ENCODE measurements at regions of chr9 and their contacts with region 1.

Region 1: GRCh38 chr9:125746017-125746773 is 978 bp upstream of the PBX3 start:
- DNase-seq: peak; percentile 86 to 96 (median 89)
- ATAC-seq: peak; percentile 93
- H3K4me3 ChIP-seq: peak overlapping the region; percentile 87
- H3K4me3 Mint-ChIP-seq: peak overlapping the region; percentile 94 to 99 (median 94)
- H3K27ac ChIP-seq: peak overlapping the region; percentile 65
- H3K27ac Mint-ChIP-seq: peak overlapping the region; percentile 84 to 93 (median 90)
- H3K4me1 ChIP-seq: peaks cover 0 to 4% of the 10 kb centered on the region in 2 donors
- H3K4me1 Mint-ChIP-seq: peaks cover 9 to 41% (median 33%) of the 10 kb centered on the region in 7 donors
- H3K27me3 ChIP-seq: no peaks in the 10 kb centered on the region
- H3K27me3 Mint-ChIP-seq: peaks cover 0 to 41% (median 0%) of the 10 kb centered on the region in 5 donors

Region 2: DNA sequence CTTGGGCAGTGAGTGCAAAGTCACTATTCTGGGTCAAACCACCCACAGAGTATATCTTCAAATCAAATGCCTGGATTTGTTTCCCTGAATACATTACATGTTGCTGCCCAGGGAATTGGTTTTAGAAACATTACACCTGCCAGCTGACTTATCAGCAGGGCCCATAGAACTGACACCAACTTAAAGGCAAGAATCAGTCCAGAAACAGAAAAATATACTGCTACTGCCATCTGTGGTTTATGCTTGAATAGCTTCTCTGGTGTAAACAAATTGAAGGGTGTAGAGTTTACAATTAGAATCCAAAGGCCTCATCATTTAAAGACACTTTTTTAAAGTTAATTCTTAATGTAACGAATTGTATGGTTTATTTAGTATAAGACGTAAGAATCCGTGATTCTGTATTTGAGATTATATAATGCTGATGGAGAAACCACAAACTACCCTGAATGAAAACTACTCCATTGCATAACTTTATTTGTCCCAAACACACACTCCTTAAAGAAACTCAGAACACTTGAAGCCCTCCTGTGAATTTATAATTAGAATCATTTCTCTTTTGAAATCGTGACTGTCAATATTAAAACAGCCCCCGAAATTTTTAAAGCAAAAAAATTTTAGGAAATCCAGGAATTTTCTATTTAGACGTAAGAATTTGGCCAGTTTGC is 981.3 kb before region 1 on chr9:
- CTCF ChIA-PET with region 1: no interaction called
- POLR2A ChIA-PET with region 1: no interaction called
- intact Hi-C with region 1: loop called in 1 of 2 experiments (anchors 10 kb)
- DNase-seq: no peak
- ATAC-seq: no peak
- H3K4me3 ChIP-seq: no peak overlapping the region
- H3K4me3 Mint-ChIP-seq: no peak overlapping the region
- H3K27ac ChIP-seq: no peak overlapping the region
- H3K27ac Mint-ChIP-seq: no peak overlapping the region
- H3K4me1 ChIP-seq: peaks cover 5% of the 10 kb centered on the region in 2 donors
- H3K4me1 Mint-ChIP-seq: peaks cover 0 to 14% (median 11%) of the 10 kb centered on the region in 7 donors
- H3K27me3 ChIP-seq: peaks cover 8 to 26% of the 10 kb centered on the region in 2 donors
- H3K27me3 Mint-ChIP-seq: peaks cover 68 to 92% (median 81%) of the 10 kb centered on the region in 5 donors

Region 3: DNA sequence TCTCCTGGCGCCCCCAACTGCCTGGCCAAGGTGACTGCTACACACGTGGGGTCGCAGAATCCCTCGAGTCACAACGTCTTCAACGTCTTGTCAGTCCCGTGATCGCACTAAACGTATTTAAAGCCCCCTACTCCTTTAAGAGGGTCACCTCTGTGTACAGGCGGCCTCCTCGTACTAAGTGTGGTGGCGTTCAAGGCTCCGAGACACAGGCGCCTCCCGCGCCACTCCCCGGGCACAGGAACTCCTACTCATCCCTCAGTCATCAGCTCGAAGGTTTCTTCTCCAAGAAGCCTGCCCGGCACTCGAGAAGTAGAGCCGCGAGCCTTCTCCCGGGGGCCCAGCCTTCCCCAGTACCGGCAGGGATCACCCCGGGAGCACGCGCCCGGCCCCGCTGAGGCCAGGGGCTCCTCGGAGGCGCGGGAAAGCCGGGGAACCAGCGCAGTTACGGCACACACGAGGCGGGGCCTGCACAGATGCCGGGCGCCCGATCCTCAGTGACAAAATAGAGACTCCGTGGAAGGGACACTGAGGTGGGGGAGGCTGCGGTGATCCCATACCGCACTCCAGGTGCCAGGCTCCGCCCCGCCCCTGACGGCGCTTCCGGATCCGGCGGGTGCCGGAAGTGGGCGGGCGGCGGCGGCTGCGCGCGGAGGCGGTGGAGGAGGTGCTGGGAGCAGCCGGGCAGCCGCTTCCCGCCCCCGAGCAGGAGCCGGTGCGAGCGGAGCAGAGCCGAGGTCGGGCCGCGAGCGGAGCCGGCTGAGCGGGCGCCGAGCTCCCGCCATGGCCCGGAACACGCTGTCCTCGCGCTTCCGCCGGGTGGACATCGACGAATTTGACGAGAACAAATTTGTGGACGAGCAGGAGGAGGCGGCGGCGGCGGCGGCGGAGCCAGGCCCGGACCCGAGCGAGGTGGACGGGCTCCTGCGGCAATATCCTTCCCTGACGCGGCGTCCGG is 877.4 kb before region 1 on chr9:
- CTCF ChIA-PET with region 1: no interaction called
- POLR2A ChIA-PET with region 1: no interaction called
- intact Hi-C with region 1: loop called (anchors 2 to 5 kb)
- DNase-seq: peak; percentile 84 to 99 (median 91)
- ATAC-seq: peak; percentile 89
- H3K4me3 ChIP-seq: peak overlapping the region; percentile 95
- H3K4me3 Mint-ChIP-seq: peak overlapping the region; percentile 87 to 96 (median 93)
- H3K27ac ChIP-seq: peak overlapping the region; percentile 87
- H3K27ac Mint-ChIP-seq: peak overlapping the region; percentile 82 to 98 (median 89)
- H3K4me1 ChIP-seq: peaks cover 29 to 39% of the 10 kb centered on the region in 2 donors
- H3K4me1 Mint-ChIP-seq: peaks cover 20 to 55% (median 47%) of the 10 kb centered on the region in 7 donors
- H3K27me3 ChIP-seq: no peaks in the 10 kb centered on the region
- H3K27me3 Mint-ChIP-seq: no peaks in the 10 kb centered on the region

Region 4: GRCh38 chr9:125241000-125241862 is 505.0 kb before region 1 on chr9 and contains the start of gene HSPA5:
- CTCF ChIA-PET with region 1: no interaction called
- POLR2A ChIA-PET with region 1: no interaction called
- intact Hi-C with region 1: loop called (anchors 1 to 2 kb)
- DNase-seq: peak; percentile 94 to 100 (median 99)
- ATAC-seq: peak; percentile 94
- H3K4me3 ChIP-seq: peak within 1 kb of the TSS; percentile 85
- H3K4me3 Mint-ChIP-seq: peak within 1 kb of the TSS; percentile 94 to 99 (median 98)
- H3K27ac ChIP-seq: peak within 1 kb of the TSS; percentile 97
- H3K27ac Mint-ChIP-seq: peak within 1 kb of the TSS; percentile 96 to 100 (median 99)
- H3K4me1 ChIP-seq: peaks cover 39 to 48% of the 10 kb centered on the region in 2 donors
- H3K4me1 Mint-ChIP-seq: peaks cover 27 to 49% (median 45%) of the 10 kb centered on the region in 7 donors
- H3K27me3 ChIP-seq: no peaks in the 10 kb centered on the region
- H3K27me3 Mint-ChIP-seq: peaks cover 0 to 5% (median 0%) of the 10 kb centered on the region in 5 donors
- total RNA-seq, gene HSPA5: 127 to 248 (median 155) TPM

Region 5: GRCh38 chr9:125558453-125559092 is 187.6 kb before region 1 on chr9:
- CTCF ChIA-PET with region 1: no interaction called
- POLR2A ChIA-PET with region 1: no interaction called
- intact Hi-C with region 1: loop called in 1 of 2 experiments (anchors 2 kb)
- DNase-seq: peak in 8 of 9 donors; percentile 18 to 63 (median 55)
- ATAC-seq: peak; percentile 78
- H3K4me3 ChIP-seq: no peak overlapping the region
- H3K4me3 Mint-ChIP-seq: no peak overlapping the region
- H3K27ac ChIP-seq: no peak overlapping the region
- H3K27ac Mint-ChIP-seq: peak overlapping the region in 1 of 9 donors; percentile 28
- H3K4me1 ChIP-seq: no peaks in the 10 kb centered on the region
- H3K4me1 Mint-ChIP-seq: peaks cover 0 to 19% (median 11%) of the 10 kb centered on the region in 7 donors
- H3K27me3 ChIP-seq: no peaks in the 10 kb centered on the region
- H3K27me3 Mint-ChIP-seq: no peaks in the 10 kb centered on the region

Region 6: DNA sequence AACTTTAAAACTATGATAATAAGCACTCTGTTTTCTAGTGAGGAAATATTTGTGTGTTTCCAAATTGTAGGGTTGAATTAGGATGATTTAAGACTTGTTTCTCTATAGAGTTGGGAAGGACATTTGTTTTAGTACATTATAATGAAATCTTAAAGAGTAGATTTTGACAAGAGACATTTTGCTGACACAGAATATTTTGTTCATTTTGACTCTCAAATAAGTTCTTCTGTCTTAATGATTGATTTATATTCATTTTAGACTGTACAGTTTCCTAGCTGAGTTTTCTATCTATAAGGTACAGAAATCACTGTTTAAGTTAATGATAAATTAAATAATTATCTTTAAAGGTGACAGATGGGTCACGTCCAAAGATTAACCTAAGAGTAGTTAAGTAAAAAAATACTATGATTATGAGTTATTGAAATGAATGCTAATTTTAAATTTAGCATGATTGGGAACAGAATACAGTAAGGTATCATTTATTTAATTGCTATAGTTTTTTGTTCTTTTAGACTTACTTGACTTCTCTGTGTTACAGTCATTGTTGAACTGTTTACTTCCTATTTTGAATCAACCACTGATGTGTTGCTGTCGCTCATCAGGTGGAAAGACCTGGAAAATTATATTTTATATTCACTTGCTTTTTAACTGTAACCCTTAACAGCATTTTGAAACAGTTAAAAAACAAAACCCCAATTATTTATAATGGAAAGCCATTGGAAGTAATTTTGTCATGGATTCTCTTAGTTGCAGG is 20.4 kb after region 1 on chr9:
- CTCF ChIA-PET with region 1: no interaction called
- POLR2A ChIA-PET with region 1: no interaction called
- intact Hi-C with region 1: loop called in 1 of 2 experiments (anchors 1 kb)
- DNase-seq: no peak
- ATAC-seq: no peak
- H3K4me3 ChIP-seq: no peak overlapping the region
- H3K4me3 Mint-ChIP-seq: no peak overlapping the region
- H3K27ac ChIP-seq: no peak overlapping the region
- H3K27ac Mint-ChIP-seq: no peak overlapping the region
- H3K4me1 ChIP-seq: no peaks in the 10 kb centered on the region
- H3K4me1 Mint-ChIP-seq: peaks cover 5 to 24% (median 11%) of the 10 kb centered on the region in 7 donors
- H3K27me3 ChIP-seq: no peaks in the 10 kb centered on the region
- H3K27me3 Mint-ChIP-seq: no peaks in the 10 kb centered on the region

Region 7: GRCh38 chr9:125889476-125890419 is 143.6 kb after region 1 on chr9:
- CTCF ChIA-PET with region 1: no interaction called
- POLR2A ChIA-PET with region 1: no interaction called
- intact Hi-C with region 1: loop called in 1 of 2 experiments (anchors 1 kb)
- DNase-seq: peak; percentile 28 to 46 (median 38)
- ATAC-seq: peak; percentile 91
- H3K4me3 ChIP-seq: peak overlapping the region; percentile 46
- H3K4me3 Mint-ChIP-seq: peak overlapping the region; percentile 81 to 95 (median 83)
- H3K27ac ChIP-seq: no peak overlapping the region
- H3K27ac Mint-ChIP-seq: peak overlapping the region in 3 of 9 donors; percentile 13 to 63 (median 18)
- H3K4me1 ChIP-seq: peaks cover 5 to 6% of the 10 kb centered on the region in 2 donors
- H3K4me1 Mint-ChIP-seq: peaks cover 5 to 22% (median 15%) of the 10 kb centered on the region in 7 donors
- H3K27me3 ChIP-seq: no peaks in the 10 kb centered on the region
- H3K27me3 Mint-ChIP-seq: peaks cover 14 to 69% (median 28%) of the 10 kb centered on the region in 5 donors

Region 8: GRCh38 chr9:125911861-125912644 is 165.9 kb after region 1 on chr9:
- CTCF ChIA-PET with region 1: no interaction called
- POLR2A ChIA-PET with region 1: no interaction called
- intact Hi-C with region 1: no loop called
- DNase-seq: no peak
- ATAC-seq: no peak
- H3K4me3 ChIP-seq: no peak overlapping the region
- H3K4me3 Mint-ChIP-seq: no peak overlapping the region
- H3K27ac ChIP-seq: no peak overlapping the region
- H3K27ac Mint-ChIP-seq: no peak overlapping the region
- H3K4me1 ChIP-seq: no peaks in the 10 kb centered on the region
- H3K4me1 Mint-ChIP-seq: peaks cover 0 to 2% (median 0%) of the 10 kb centered on the region in 7 donors
- H3K27me3 ChIP-seq: no peaks in the 10 kb centered on the region
- H3K27me3 Mint-ChIP-seq: peaks cover 0 to 2% (median 0%) of the 10 kb centered on the region in 5 donors